ENCODE measurements at regions of chr21 and their contacts with region 1.

Region 1: GRCh38 chr21:40373754-40374153 is 473.2 kb downstream of the DSCAM start:
- DNase-seq: no peak
- H3K4me3 ChIP-seq: no peak overlapping the region
- H3K27ac ChIP-seq: no peak overlapping the region
- H3K4me1 ChIP-seq: no peaks in the 10 kb centered on the region
- H3K27me3 ChIP-seq: no peaks in the 10 kb centered on the region
- CTCF ChIP-seq: no peak
- EP300 ChIP-seq: no peak
- POLR2A ChIP-seq: no peak

Region 2: DNA sequence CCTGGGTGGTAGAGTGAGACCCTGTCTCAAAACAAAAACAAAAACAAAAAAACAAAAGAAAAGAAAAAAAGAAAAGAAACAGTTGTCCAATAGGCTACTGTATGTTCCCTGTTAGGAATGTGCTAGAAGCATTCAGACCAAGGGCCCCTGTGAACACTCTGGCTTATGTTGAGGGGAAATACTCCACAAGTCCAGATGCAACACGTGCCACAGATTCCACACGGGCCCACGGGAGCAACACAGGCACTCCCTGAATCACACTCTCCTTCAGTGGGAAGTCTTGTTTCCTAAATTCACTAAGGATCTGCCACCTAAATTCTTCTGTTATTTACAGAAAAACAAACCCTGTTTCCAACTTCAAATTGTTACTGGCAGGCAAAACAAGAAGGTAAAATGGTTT is 215.4 kb before region 1 on chr21:
- in situ Hi-C with region 1: no loop called
- intact Hi-C with region 1: loop called (anchors 10 kb)
- DNase-seq: no peak
- H3K4me3 ChIP-seq: no peak overlapping the region
- H3K27ac ChIP-seq: no peak overlapping the region
- H3K4me1 ChIP-seq: no peaks in the 10 kb centered on the region
- H3K27me3 ChIP-seq: no peaks in the 10 kb centered on the region
- CTCF ChIP-seq: no peak
- EP300 ChIP-seq: no peak
- POLR2A ChIP-seq: no peak

Region 3: GRCh38 chr21:40270047-40270446 is 103.7 kb before region 1 on chr21:
- in situ Hi-C with region 1: no loop called
- intact Hi-C with region 1: no loop called
- DNase-seq: no peak
- H3K4me3 ChIP-seq: no peak overlapping the region
- H3K27ac ChIP-seq: no peak overlapping the region
- H3K4me1 ChIP-seq: no peaks in the 10 kb centered on the region
- H3K27me3 ChIP-seq: no peaks in the 10 kb centered on the region
- CTCF ChIP-seq: no peak
- EP300 ChIP-seq: no peak
- POLR2A ChIP-seq: no peak

Region 4: DNA sequence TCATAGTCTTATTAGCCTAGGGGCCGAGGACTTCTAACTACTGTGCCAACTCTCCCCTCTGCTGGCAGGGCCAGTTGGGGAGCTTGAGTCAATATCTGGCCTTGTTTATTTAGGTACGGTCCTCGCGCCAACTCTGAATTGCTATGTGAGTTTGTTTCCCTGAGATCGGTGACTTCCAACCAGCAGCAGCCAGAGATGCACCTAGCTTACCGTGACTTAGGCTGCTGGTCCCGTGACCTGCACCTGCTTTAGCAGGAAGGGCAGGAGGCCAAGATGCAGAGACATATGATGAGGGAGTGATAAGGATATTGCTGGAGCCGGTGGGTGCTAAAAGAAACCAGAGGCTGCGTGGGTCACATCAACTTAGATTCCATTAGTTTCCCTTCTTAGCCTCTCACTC is 55.3 kb before region 1 on chr21:
- in situ Hi-C with region 1: no loop called
- intact Hi-C with region 1: no loop called
- DNase-seq: no peak
- H3K4me3 ChIP-seq: no peak overlapping the region
- H3K27ac ChIP-seq: no peak overlapping the region
- H3K4me1 ChIP-seq: no peaks in the 10 kb centered on the region
- H3K27me3 ChIP-seq: no peaks in the 10 kb centered on the region
- CTCF ChIP-seq: no peak
- EP300 ChIP-seq: no peak
- POLR2A ChIP-seq: no peak

Region 5: DNA sequence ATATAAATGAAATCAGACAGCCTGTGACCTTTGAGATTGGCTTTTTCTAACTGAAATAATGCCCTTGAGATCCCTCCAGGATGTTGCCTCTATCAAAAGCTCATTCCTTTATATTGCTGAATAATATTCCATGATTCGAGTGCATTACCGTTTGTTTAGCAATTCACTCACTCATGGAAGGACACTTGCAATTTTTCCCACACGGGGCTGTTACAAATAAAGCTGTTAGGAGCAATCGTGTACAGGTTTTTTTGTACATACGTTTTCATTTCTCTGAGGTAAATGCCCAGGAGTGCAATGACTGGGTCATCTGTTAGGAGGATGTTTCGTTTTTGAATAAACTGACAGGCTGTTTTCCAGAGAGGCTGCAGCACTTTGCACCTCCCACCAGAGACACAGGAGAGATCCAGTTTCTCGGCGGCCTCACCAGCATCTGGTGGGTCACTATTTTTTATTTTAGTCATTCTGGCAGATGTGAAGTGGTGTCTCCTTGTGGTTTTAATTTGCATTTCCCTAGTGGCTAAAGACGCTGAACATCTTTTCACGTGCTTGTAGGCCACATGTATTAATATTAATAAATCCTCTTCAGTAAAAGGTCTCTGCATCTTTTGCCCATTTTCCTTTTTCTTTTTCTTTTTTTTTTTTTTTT is 1494.4 kb after region 1 on chr21:
- in situ Hi-C with region 1: no loop called
- intact Hi-C with region 1: no loop called
- DNase-seq: peak; percentile 43
- H3K4me3 ChIP-seq: no peak overlapping the region
- H3K27ac ChIP-seq: peak overlapping the region in 1 of 4 donors; percentile 23
- H3K4me1 ChIP-seq: peaks cover 0 to 3% (median 0%) of the 10 kb centered on the region in 4 donors
- H3K27me3 ChIP-seq: no peaks in the 10 kb centered on the region
- CTCF ChIP-seq: no peak
- EP300 ChIP-seq: no peak
- POLR2A ChIP-seq: no peak